Naive thymus-derived CD4-positive, alpha-beta T cell (primary cell): ENCODE measurements at regions of chr18 and their contacts with region 1.

Region 1: GRCh38 chr18:35355140-35355618 is 11.0 kb upstream of the ZNF24 start:
- DNase-seq: peak; percentile 16 to 67 (median 49)
- ATAC-seq: peak; percentile 98
- H3K4me3 ChIP-seq: no peak overlapping the region
- H3K4me3 Mint-ChIP-seq: no peak overlapping the region
- H3K27ac ChIP-seq: no peak overlapping the region
- H3K27ac Mint-ChIP-seq: peak overlapping the region in 1 of 9 donors; percentile 21
- H3K4me1 ChIP-seq: no peaks in the 10 kb centered on the region
- H3K4me1 Mint-ChIP-seq: peaks cover 0 to 7% (median 0%) of the 10 kb centered on the region in 7 donors
- H3K27me3 ChIP-seq: no peaks in the 10 kb centered on the region
- H3K27me3 Mint-ChIP-seq: peaks cover 0 to under 1% (median 0%) of the 10 kb centered on the region in 5 donors

Region 2: GRCh38 chr18:34867520-34867919 is 487.7 kb before region 1 on chr18:
- CTCF ChIA-PET with region 1: no interaction called
- POLR2A ChIA-PET with region 1: no interaction called
- intact Hi-C with region 1: loop called in 1 of 2 experiments (anchors 5 kb)
- DNase-seq: no peak
- ATAC-seq: no peak
- H3K4me3 ChIP-seq: no peak overlapping the region
- H3K4me3 Mint-ChIP-seq: no peak overlapping the region
- H3K27ac ChIP-seq: no peak overlapping the region
- H3K27ac Mint-ChIP-seq: no peak overlapping the region
- H3K4me1 ChIP-seq: no peaks in the 10 kb centered on the region
- H3K4me1 Mint-ChIP-seq: peaks cover 0 to 24% (median 9%) of the 10 kb centered on the region in 7 donors
- H3K27me3 ChIP-seq: no peaks in the 10 kb centered on the region
- H3K27me3 Mint-ChIP-seq: peaks cover 0 to 10% (median 0%) of the 10 kb centered on the region in 5 donors

Region 3: DNA sequence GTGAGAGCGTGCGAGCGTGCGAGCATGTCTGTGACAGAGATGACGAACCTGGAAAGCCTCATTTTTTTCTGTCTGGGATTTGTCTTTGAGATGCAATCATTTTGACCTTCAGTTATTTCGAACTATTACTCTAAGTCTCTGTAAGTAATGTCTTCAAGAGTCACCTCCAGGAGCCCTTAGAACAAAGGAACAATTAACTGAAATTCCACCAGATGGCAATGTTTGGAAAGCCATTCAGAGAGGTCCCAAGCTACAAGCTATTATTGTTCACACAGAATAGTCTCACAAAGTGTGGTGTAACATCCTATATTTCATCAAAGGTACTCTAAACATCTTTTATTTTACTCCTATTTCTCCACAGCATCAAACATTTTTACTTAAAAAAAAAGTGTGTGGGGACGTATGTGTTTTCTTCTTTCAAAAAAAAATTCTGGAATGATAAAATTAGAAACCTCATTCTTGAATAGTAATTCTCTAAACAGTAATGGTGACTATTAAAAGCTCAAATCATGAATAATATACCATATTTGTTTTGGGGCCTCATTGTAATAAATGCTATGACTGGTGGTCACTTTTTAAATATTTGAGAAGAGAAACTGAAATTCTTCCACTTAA is 349.1 kb before region 1 on chr18:
- CTCF ChIA-PET with region 1: interaction called, 3 read pairs
- POLR2A ChIA-PET with region 1: no interaction called
- intact Hi-C with region 1: loop called (anchors 1 to 10 kb)
- DNase-seq: peak in 7 of 9 donors; percentile 29 to 66 (median 54)
- ATAC-seq: peak; percentile 80
- H3K4me3 ChIP-seq: no peak overlapping the region
- H3K4me3 Mint-ChIP-seq: no peak overlapping the region
- H3K27ac ChIP-seq: no peak overlapping the region
- H3K27ac Mint-ChIP-seq: no peak overlapping the region
- H3K4me1 ChIP-seq: no peaks in the 10 kb centered on the region
- H3K4me1 Mint-ChIP-seq: no peaks in the 10 kb centered on the region
- H3K27me3 ChIP-seq: no peaks in the 10 kb centered on the region
- H3K27me3 Mint-ChIP-seq: no peaks in the 10 kb centered on the region

Region 4: DNA sequence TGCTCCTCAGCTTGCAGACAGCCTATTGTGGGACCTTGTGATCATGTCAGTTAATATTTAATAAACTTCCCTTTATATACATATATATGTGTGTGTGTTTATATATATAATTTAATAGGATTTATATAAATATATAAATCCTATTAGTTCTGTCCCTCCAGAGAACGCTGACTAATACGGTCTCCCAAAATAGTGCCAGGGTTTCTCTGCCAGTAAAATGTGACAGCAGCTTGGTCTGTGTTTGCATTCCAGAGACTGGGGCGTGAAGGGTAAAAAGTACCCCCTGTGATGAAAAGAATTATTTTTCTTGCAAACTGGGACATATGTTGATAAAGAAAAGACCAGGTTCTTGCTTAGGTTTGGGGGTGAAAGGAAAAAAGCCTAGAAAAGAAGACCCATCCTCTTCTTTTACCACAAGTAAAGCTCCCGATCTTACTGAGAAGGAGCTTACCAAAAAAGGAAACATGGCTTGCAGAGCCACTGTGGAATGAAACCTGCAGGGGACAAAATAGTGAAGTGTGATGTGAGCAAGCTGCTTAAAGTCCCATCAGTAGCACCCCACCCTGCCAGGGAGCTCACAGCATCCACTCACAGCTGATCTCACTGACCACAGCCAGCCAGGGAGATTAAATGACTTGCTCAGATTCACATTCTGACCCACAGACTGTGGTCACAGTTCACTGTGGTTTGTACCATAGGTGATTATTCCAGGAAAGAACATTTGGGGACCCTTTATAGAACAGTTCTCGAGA is 506.4 kb after region 1 on chr18:
- CTCF ChIA-PET with region 1: no interaction called
- POLR2A ChIA-PET with region 1: no interaction called
- intact Hi-C with region 1: no loop called
- DNase-seq: no peak
- ATAC-seq: no peak
- H3K4me3 ChIP-seq: no peak overlapping the region
- H3K4me3 Mint-ChIP-seq: no peak overlapping the region
- H3K27ac ChIP-seq: no peak overlapping the region
- H3K27ac Mint-ChIP-seq: no peak overlapping the region
- H3K4me1 ChIP-seq: no peaks in the 10 kb centered on the region
- H3K4me1 Mint-ChIP-seq: peaks cover 0 to 2% (median 0%) of the 10 kb centered on the region in 7 donors
- H3K27me3 ChIP-seq: no peaks in the 10 kb centered on the region
- H3K27me3 Mint-ChIP-seq: peaks cover 0 to 14% (median 5%) of the 10 kb centered on the region in 5 donors